ENCODE measurements at regions of chr13 and their contacts with region 1.

Region 1: DNA sequence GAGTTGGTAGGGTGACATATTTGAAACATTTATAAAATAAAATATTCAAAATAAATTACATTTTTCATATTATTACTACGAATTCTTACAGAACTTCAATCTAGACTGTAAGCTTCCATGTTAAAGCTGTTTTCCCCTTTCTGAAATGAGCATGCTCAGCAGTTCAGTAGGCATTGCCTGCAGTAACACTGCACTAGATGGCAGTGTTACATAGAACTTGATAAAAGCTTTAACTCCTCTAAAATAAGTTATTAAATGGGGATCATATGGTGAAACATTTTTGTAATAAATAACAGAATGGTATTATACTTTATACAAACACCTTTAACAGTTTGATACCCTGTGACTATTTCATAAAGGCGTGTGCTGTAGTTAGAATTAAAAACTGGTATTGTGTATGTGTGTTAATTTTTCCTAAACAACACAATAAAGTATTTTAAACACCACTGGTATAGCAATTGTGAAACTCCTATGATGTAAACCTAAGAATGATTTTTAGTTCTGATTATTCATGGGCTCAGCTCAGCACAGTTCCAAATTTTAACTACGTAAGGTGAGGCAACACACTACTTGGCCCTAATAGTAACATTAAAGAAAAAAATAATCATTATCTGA is 11.6 kb upstream of the GPR18 start:
- DNase-seq: peak; percentile 54
- H3K4me3 Mint-ChIP-seq: no peak overlapping the region
- H3K27ac Mint-ChIP-seq: no peak overlapping the region
- H3K4me1 Mint-ChIP-seq: no peaks in the 10 kb centered on the region
- H3K27me3 Mint-ChIP-seq: no peaks in the 10 kb centered on the region
- CTCF ChIP-seq: peak; percentile 43

Region 2: DNA sequence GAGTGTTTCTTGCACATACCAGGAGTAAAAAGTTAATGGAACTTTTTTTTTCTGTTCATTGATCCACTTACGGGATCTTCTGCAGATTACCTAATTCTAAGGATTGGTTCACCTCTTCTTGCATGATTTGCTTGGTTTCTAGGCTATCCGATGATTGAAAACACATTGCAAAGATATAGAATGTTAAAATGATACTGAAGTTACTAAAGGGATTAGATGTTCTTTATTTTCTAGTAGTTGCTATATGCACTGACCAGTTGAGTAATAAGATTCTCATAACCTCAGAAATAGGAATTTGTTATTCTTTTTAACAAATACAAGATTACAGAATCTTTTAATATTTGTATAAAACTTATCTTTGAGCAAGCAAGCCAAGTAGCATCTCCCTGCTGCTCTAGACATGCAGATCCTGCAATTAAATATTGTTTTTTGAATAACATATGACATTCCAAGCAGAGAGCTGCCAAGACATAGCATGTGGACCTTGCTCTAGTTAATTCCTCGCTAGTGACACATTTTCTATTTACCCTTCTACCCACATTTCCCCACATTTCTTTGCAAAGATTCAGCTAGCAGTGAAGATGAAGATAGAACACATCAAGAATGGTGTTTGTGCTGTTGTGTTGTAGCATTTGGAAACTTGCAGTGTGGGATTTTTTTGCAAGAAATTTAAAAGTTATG is 1040.9 kb before region 1 on chr13:
- CTCF ChIA-PET with region 1: no interaction called
- POLR2A ChIA-PET with region 1: no interaction called
- intact Hi-C with region 1: no loop called
- DNase-seq: no peak
- H3K4me3 Mint-ChIP-seq: no peak overlapping the region
- H3K27ac Mint-ChIP-seq: no peak overlapping the region
- H3K4me1 Mint-ChIP-seq: no peaks in the 10 kb centered on the region
- H3K27me3 Mint-ChIP-seq: no peaks in the 10 kb centered on the region
- CTCF ChIP-seq: no peak

Region 3: GRCh38 chr13:98648141-98648540 is 621.6 kb before region 1 on chr13:
- CTCF ChIA-PET with region 1: no interaction called
- POLR2A ChIA-PET with region 1: no interaction called
- intact Hi-C with region 1: no loop called
- DNase-seq: no peak
- H3K4me3 Mint-ChIP-seq: no peak overlapping the region
- H3K27ac Mint-ChIP-seq: no peak overlapping the region
- H3K4me1 Mint-ChIP-seq: peaks cover 2% of the 10 kb centered on the region
- H3K27me3 Mint-ChIP-seq: no peaks in the 10 kb centered on the region
- CTCF ChIP-seq: no peak

Region 4: DNA sequence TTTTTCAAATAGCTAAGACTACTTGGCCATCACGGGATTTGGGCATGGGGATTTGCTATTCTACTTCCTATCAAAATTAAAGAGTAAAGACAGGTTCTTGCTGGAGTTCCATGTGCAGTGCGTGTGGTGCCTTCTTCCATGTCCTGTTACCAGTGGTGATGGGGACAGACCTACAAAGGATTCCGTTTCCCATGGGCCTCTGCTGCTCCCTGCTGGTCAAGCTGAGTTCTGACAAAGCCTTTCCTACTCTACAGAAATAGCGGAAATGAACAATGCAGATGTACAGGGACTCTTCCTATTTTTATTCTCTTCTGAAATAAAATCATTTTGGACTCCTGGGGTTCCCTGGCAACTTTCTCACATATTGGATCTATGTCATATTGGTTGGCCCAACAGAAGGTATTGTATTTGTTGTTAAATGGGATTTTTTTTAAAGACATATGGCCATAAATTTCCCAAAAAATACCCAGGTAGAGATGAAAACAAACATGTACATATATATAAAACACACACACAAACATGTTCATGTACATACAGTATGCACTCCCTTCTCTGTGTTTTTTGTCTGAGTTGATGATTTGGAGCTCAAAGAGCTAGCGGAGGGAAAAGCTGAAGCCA is 426.8 kb before region 1 on chr13:
- CTCF ChIA-PET with region 1: interaction called, 5 read pairs
- POLR2A ChIA-PET with region 1: interaction called, 4 read pairs
- intact Hi-C with region 1: loop called (anchors 1 kb)
- DNase-seq: peak; percentile 67
- H3K4me3 Mint-ChIP-seq: no peak overlapping the region
- H3K27ac Mint-ChIP-seq: no peak overlapping the region
- H3K4me1 Mint-ChIP-seq: no peaks in the 10 kb centered on the region
- H3K27me3 Mint-ChIP-seq: no peaks in the 10 kb centered on the region
- CTCF ChIP-seq: peak; percentile 83

Region 5: DNA sequence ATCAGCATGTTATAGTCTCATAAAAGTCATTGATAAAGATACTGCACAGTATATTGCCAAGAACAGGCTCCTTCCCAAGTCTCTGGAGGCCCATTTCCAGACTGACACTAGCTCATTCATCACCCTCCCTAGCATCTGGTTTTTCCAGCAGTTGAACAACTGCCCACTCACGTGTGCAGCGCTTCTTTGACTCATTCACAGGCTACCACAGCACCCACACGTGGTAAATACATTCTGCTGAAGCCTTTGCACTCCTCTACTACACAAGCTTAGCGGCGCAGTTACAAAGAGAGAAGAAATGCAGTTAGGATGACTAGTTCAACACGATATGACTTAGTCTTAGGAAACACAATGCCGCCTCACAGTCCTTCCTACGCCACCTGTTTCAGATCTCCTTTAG is 379.5 kb before region 1 on chr13:
- CTCF ChIA-PET with region 1: interaction called, 8 read pairs
- POLR2A ChIA-PET with region 1: no interaction called
- intact Hi-C with region 1: loop called (anchors 10 kb)
- DNase-seq: peak; percentile 85
- H3K4me3 Mint-ChIP-seq: no peak overlapping the region
- H3K27ac Mint-ChIP-seq: peak overlapping the region; percentile 71
- H3K4me1 Mint-ChIP-seq: peaks cover 19% of the 10 kb centered on the region
- H3K27me3 Mint-ChIP-seq: no peaks in the 10 kb centered on the region
- CTCF ChIP-seq: no peak

Region 6: DNA sequence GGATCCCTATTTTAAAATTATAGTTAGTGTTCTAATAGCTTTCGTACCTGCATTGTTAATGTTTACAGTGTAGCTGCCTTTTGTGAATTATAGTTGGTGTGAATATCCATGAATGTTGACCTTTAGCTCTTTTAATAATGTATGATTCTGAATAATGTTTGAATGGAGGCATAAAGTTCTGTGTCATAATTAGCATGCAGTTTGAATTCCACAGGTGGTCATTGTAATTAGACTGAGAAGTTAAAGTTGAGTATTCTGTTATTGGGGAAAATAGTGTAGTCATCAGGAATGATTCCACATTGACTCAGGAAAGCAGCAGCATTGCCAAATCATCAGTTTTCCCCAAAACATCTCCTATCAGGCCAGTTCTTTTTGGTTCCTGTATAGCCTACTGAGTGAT is 23.6 kb before region 1 on chr13:
- CTCF ChIA-PET with region 1: interaction called, 10 read pairs
- POLR2A ChIA-PET with region 1: no interaction called
- intact Hi-C with region 1: no loop called
- DNase-seq: no peak
- H3K4me3 Mint-ChIP-seq: no peak overlapping the region
- H3K27ac Mint-ChIP-seq: no peak overlapping the region
- H3K4me1 Mint-ChIP-seq: no peaks in the 10 kb centered on the region
- H3K27me3 Mint-ChIP-seq: no peaks in the 10 kb centered on the region
- CTCF ChIP-seq: no peak

Region 7: GRCh38 chr13:99258210-99258860 is 11.4 kb before region 1 on chr13 and contains the start of gene GPR18:
- CTCF ChIA-PET with region 1: interaction called, 20 read pairs
- POLR2A ChIA-PET with region 1: interaction called, 3 read pairs
- intact Hi-C with region 1: no loop called
- DNase-seq: no peak
- H3K4me3 Mint-ChIP-seq: no peak within 1 kb of the TSS
- H3K27ac Mint-ChIP-seq: no peak within 1 kb of the TSS
- H3K4me1 Mint-ChIP-seq: peaks cover 5% of the 10 kb centered on the region
- H3K27me3 Mint-ChIP-seq: no peaks in the 10 kb centered on the region
- CTCF ChIP-seq: no peak
- total RNA-seq, gene GPR18: not detected in 2 replicates

Region 8: GRCh38 chr13:99280166-99280565 is 10.4 kb after region 1 on chr13:
- CTCF ChIA-PET with region 1: interaction called, 28 read pairs
- POLR2A ChIA-PET with region 1: interaction called, 6 read pairs
- intact Hi-C with region 1: no loop called
- DNase-seq: peak; percentile 75
- H3K4me3 Mint-ChIP-seq: no peak overlapping the region
- H3K27ac Mint-ChIP-seq: peak overlapping the region; percentile 36
- H3K4me1 Mint-ChIP-seq: peaks cover 19% of the 10 kb centered on the region
- H3K27me3 Mint-ChIP-seq: no peaks in the 10 kb centered on the region
- CTCF ChIP-seq: no peak

Region 9: GRCh38 chr13:99847318-99847750 is 577.6 kb after region 1 on chr13:
- CTCF ChIA-PET with region 1: no interaction called
- POLR2A ChIA-PET with region 1: no interaction called
- intact Hi-C with region 1: no loop called
- DNase-seq: no peak
- H3K4me3 Mint-ChIP-seq: no peak overlapping the region
- H3K27ac Mint-ChIP-seq: no peak overlapping the region
- H3K4me1 Mint-ChIP-seq: no peaks in the 10 kb centered on the region
- H3K27me3 Mint-ChIP-seq: no peaks in the 10 kb centered on the region
- CTCF ChIP-seq: no peak